Activated T-helper 1 cell treated with anti-CD3 and anti-CD28 coated beads, Interleukin-12 subunit alpha, Interleukin-12 subunit beta, Interleukin-2, Interleukin-4 antibody, amounts not matched to agents 30 ng/mL and 10 ng/mL and 1 ng/mL, durations not matched to agents 14 hours and 24 hours and 36 hours (primary cell): ENCODE measurements at regions of chr14 and their contacts with region 1.

Region 1: DNA sequence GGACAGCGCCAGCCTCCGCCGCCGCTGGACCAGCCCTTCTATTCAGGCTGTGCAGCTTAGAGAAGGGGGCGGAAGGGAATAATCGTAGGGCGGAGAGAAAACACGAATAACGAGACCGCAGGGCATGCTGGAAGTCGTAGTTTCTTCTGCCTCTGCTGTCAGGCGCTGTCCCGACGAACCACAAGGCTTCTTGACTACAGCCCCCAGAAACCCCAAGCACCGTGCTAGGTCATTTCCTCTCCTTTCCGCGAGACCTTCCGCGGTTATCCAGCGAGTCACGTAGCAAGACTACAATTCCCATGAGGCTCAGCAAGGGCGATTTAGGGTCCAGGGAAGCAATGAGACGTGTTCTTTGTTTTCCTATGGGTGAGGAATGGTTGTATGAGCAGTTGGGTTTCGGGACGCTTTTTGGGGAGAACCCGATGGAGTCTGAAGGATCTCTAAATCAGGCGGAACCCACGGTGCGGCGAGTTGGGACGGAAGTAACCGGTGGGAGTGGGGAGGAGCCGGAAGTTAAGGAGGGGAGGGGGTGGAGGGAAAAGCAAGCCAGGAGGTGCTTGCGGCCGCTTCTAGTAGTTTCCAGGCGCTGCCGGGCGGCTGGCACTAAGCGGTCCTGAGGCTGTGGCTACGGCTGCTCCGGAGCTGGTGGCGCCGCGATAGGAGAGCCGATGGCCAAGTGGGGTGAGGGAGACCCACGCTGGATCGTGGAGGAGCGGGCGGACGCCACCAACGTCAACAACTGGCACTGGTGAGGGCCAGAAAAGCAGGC is at the starts of genes AHSA1 and VIPAS39:
- DNase-seq: peak; percentile 92
- H3K4me3 Mint-ChIP-seq: peak within 1 kb of the TSS; percentile 100
- H3K27ac Mint-ChIP-seq: peak within 1 kb of the TSS; percentile 100
- H3K4me1 Mint-ChIP-seq: peaks cover 29% of the 10 kb centered on the region
- H3K27me3 Mint-ChIP-seq: no peaks in the 10 kb centered on the region
- total RNA-seq, gene AHSA1: 370 and 383 TPM in 2 replicates
- total RNA-seq, gene VIPAS39: 17.3 and 18.7 TPM in 2 replicates

Region 2: DNA sequence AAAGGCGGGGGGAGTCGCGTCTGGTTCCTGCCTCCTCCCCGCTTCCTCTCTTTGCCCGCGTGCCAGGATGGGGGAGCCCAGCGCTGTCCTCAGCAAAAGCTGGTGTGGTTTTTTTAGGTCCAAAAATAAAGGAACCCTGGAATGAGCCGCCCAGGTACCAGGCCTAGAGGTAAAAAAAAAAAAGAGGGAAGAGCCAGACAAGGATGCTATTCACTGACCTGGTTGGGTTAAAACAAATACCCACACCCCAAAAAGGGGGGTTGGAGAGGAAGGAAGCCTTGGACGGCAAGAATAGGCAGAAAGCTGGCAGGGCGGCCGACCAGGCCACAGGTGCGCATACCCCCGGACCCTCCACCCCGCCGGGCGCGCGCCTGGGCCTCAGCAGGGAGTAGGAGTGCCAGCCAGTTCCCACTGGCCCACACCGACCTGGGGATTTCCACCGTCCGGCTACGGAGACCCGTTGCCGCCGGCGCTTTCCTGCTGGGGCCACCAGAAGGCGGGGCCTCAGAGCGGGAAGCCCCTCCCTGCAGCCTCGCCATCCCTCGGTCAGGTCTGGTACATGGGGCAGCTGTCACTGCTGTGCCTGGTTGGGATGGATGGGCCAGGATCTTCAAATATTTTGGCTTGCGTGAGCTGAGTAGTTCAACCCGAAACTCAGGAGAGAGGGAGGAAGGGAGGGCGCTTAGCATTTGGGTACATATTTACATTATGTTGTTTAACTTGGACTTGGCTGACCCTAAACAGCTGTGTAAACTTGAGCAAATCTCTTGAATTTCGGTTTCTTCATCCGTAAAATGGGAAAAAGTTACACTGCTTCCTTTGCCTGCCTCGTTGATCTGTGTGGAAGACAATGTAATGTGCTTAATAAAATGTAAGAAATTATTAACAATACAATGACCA is 423.8 kb before region 1 on chr14:
- intact Hi-C with region 1: loop called (anchors 10 kb)
- DNase-seq: peak; percentile 80
- H3K4me3 Mint-ChIP-seq: peak overlapping the region; percentile 87
- H3K27ac Mint-ChIP-seq: peak overlapping the region; percentile 98
- H3K4me1 Mint-ChIP-seq: peaks cover 79% of the 10 kb centered on the region
- H3K27me3 Mint-ChIP-seq: no peaks in the 10 kb centered on the region

Region 3: GRCh38 chr14:77158175-77158891 is 299.4 kb before region 1 on chr14:
- intact Hi-C with region 1: no loop called
- DNase-seq: no peak
- H3K4me3 Mint-ChIP-seq: no peak overlapping the region
- H3K27ac Mint-ChIP-seq: no peak overlapping the region
- H3K4me1 Mint-ChIP-seq: no peaks in the 10 kb centered on the region
- H3K27me3 Mint-ChIP-seq: peaks cover 19% of the 10 kb centered on the region

Region 4: GRCh38 chr14:77376771-77377501 is 80.8 kb before region 1 on chr14 and contains the starts of genes SAMD15 and TMED8:
- intact Hi-C with region 1: loop called (anchors 1 kb)
- DNase-seq: peak; percentile 80
- H3K4me3 Mint-ChIP-seq: peak within 1 kb of the TSS; percentile 92
- H3K27ac Mint-ChIP-seq: peak within 1 kb of the TSS; percentile 89
- H3K4me1 Mint-ChIP-seq: peaks cover 37% of the 10 kb centered on the region
- H3K27me3 Mint-ChIP-seq: peaks cover 10% of the 10 kb centered on the region
- total RNA-seq, gene SAMD15: 0.29 and 1.1 TPM in 2 replicates
- total RNA-seq, gene TMED8: 28.1 and 28.4 TPM in 2 replicates

Region 5: GRCh38 chr14:77491056-77491455 is 33.4 kb after region 1 on chr14:
- intact Hi-C with region 1: no loop called
- DNase-seq: no peak
- H3K4me3 Mint-ChIP-seq: no peak overlapping the region
- H3K27ac Mint-ChIP-seq: no peak overlapping the region
- H3K4me1 Mint-ChIP-seq: no peaks in the 10 kb centered on the region
- H3K27me3 Mint-ChIP-seq: peaks cover 3% of the 10 kb centered on the region

Region 6: DNA sequence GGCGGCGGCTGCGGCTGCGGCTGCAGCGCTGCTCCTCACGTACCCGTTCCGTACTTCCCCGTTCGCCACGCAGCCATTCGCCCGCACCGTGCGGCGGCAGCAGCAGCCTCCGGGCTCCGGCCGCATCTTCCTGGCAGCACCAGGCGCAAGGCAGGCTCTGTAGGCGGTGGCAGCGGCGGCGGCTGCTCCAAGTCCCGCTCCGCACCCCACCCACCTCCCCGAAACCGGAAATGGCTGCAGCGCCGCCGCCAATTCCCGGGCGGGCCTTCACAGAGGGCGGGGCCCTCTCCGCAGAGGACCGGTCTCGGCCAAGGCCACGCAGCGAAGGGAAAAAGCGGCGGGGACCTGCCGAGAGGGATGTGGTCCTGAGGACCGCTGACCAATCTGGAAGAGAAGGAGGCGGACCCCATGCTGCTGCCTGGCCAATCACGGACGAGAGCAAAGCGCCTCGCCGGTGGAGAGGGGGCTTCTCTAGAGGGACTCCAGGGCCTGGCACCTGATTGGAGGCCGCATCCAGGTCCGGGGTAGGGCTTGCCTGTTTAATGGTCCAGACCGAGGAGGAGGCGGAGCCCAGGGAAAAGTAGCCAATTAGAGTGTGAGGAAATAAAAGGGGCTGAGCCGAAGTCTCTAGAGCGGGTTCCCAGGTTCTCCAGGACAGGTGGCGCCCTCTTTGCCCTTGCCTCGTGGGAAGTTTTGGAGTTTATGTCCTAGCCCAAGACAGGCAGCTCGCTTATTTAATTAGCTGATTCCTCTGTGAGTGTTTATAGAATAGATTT is 158.9 kb after region 1 on chr14 and contains the start of gene SPTLC2:
- intact Hi-C with region 1: loop called (anchors 1 kb)
- DNase-seq: peak; percentile 95
- H3K4me3 Mint-ChIP-seq: peak within 1 kb of the TSS; percentile 95
- H3K27ac Mint-ChIP-seq: peak within 1 kb of the TSS; percentile 96
- H3K4me1 Mint-ChIP-seq: peaks cover 46% of the 10 kb centered on the region
- H3K27me3 Mint-ChIP-seq: peaks cover 2% of the 10 kb centered on the region
- total RNA-seq, gene SPTLC2: 29.9 and 31.9 TPM in 2 replicates

Region 7: GRCh38 chr14:77799863-77800730 is 342.4 kb after region 1 on chr14 and contains the start of gene ADCK1:
- intact Hi-C with region 1: loop called (anchors 1 kb)
- DNase-seq: peak; percentile 81
- H3K4me3 Mint-ChIP-seq: peak within 1 kb of the TSS; percentile 88
- H3K27ac Mint-ChIP-seq: peak within 1 kb of the TSS; percentile 80
- H3K4me1 Mint-ChIP-seq: peaks cover 14% of the 10 kb centered on the region
- H3K27me3 Mint-ChIP-seq: peaks cover 5% of the 10 kb centered on the region
- total RNA-seq, gene ADCK1: 3.9 and 5.4 TPM in 2 replicates